GM10248 (cell line): ENCODE measurements at regions of chr5 and their contacts with region 1.

Region 1: DNA sequence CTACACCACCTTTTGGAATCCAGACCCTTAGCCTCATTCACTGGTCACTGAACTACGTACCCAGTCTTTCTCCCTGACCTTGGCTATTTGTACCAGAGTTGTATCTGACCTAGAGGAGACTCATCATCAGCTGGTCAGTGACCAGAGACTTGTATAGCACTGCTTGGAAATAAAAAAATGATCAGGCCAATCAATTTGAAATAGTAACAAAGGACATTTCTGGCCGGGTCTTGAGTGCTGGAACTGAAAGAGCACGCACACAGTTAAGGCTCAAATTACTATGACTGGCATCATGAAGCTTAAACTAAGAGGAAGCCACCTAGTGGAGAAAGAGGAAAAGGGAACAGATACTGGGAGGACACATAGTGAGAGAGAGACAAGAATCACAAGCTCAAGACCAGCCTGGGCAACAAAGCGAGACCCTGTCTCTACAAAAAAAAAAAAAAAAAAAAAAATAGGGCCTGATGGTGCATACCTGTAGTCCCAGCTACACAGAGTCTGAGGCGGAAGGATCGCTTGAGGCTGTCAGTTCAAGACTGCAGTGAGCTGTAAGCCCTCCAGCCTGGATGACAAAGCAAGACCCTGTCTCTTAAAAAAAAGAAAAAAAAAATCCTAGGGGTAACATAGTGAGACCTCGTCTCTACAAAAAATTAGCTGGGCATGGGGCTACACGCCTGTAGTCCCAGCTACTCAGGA is 12.8 kb upstream of the SRP19 start:
- DNase-seq: peak; percentile 46
- CTCF ChIP-seq: peak; percentile 49

Region 2: DNA sequence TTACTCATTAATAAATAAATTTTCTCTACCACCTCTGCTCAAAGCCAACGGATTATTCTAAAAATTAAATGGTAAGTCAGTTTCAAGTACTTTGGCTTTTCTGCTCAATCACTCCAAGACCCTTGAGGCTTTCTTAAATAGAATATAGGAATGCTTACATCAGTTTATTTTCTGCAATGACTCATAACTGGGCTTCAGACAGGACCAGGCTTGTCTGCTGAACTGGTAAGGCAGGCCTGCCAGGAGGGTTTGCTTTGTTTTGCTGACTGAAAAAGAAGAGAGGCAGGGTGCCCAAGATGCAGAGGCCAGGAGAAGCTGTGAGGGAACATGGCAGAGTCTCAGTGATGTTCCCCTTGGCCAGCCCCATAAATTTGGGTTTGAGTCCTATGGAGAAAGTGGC is 368.9 kb before region 1 on chr5:
- CTCF ChIA-PET with region 1: no interaction called
- POLR2A ChIA-PET with region 1: no interaction called
- DNase-seq: no peak
- CTCF ChIP-seq: no peak

Region 3: GRCh38 chr5:112833971-112834370 is 14.3 kb before region 1 on chr5:
- CTCF ChIA-PET with region 1: interaction called, 13 read pairs
- POLR2A ChIA-PET with region 1: no interaction called
- DNase-seq: no peak
- CTCF ChIP-seq: no peak

Region 4: GRCh38 chr5:112860929-112861637 is 12.8 kb after region 1 on chr5 and contains the start of gene SRP19:
- CTCF ChIA-PET with region 1: interaction called, 28 read pairs
- POLR2A ChIA-PET with region 1: no interaction called
- DNase-seq: peak; percentile 96
- CTCF ChIP-seq: no peak